Sigmoid colon (tissue), 7 donors: ENCODE measurements at regions of chr13 and their contacts with region 1.

Region 1: GRCh38 chr13:75482070-75482819 is at the start of gene TBC1D4:
- DNase-seq: peak; percentile 89
- H3K4me3 ChIP-seq: peak within 1 kb of the TSS; percentile 64 to 94 (median 84)
- H3K27ac ChIP-seq: peak within 1 kb of the TSS; percentile 76 to 84 (median 81)
- H3K4me1 ChIP-seq: peaks cover 0 to 16% (median 13%) of the 10 kb centered on the region in 4 donors
- H3K27me3 ChIP-seq: no peaks in the 10 kb centered on the region
- CTCF ChIP-seq: peak; percentile 53 to 71 (median 66)
- EP300 ChIP-seq: no peak
- POLR2A ChIP-seq: no peak
- total RNA-seq, gene TBC1D4: 7.2 to 15.0 (median 10.1) TPM

Region 2: DNA sequence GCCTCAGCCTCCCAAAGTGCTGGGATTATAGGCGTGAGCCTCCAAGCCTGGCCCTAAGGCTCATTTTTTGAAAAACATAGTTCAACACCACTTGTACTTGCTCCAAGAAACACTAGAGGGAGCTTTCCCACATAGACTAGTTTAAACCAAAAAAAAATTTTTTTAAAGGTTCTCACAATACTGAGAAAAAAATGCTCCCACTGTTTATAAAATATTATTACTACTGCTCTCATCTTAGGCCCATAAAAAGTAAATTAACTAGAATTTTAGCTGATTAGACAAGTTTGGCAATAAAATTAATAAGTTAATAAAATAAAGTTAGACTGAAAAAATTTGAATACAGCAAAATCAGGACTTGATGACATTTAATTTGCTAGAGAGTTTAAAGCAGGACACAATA is 109.7 kb before region 1 on chr13:
- intact Hi-C with region 1: loop called (anchors 2 kb)
- DNase-seq: no peak
- H3K4me3 ChIP-seq: no peak overlapping the region
- H3K27ac ChIP-seq: peak overlapping the region in 1 of 4 donors; percentile 46
- H3K4me1 ChIP-seq: peaks cover 0 to 19% (median 13%) of the 10 kb centered on the region in 4 donors
- H3K27me3 ChIP-seq: no peaks in the 10 kb centered on the region
- CTCF ChIP-seq: peak in 3 of 4 experiments; percentile 35 to 73 (median 61)
- EP300 ChIP-seq: no peak
- POLR2A ChIP-seq: no peak